ENCODE measurements at regions of chr12 and their contacts with region 1.

Region 1: DNA sequence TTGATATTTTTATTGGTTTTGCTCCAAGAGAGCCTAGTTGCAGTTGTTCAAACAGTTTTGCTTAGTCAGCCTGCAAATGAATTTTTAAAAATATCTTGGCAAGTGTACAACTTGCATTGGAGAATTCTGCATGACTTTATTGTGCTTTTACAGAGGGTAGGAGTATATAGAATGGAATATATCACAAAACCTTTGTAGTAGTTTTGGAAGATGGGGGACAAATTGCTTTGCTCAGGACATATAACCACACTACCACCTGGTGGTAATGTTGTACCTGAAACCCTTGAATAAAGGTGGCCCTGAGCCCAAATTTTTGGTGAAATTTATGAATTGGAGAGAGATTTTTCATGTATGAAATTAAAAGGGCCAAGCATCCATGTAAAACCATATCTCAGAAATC is 645.2 kb downstream of the MED13L start:
- DNase-seq: no peak
- CTCF ChIP-seq: peak; percentile 32

Region 2: DNA sequence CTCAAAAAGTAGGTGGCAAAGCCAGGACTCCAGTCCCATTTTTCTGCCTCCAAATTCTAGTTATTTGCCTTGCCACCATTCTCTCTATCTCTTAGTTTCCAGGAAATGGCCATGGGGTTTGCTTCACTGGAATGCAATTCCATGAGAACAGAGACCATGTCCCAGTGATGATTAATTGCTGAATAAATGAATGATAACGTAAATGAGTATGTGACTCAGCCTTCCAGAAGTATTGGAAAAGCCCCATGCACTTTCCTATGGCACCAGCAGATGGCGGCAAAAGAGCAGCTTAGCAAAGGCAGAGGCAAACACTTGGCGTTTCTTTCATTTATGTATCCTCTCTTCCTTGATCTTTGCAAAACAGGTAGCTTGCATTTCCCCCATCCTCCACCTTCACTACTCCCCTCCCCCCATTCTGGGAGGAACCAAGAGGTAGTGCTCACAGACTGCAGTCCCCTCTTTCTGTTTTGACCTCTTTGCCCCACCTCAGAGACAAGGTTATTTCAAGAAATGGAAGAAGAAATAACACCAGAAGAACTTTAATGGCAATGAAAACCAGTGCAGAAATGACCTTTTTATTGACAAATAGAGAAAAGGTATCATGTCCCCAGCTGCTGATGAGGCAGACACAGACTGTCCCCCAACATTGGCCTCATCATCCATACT is 969.7 kb before region 1 on chr12:
- in situ Hi-C with region 1: loop called (anchors 25 kb)
- DNase-seq: peak; percentile 74
- CTCF ChIP-seq: peak; percentile 91

Measured in GM13977 (cell line).